ENCODE measurements at regions of chr6 and their contacts with region 1.

Region 1: DNA sequence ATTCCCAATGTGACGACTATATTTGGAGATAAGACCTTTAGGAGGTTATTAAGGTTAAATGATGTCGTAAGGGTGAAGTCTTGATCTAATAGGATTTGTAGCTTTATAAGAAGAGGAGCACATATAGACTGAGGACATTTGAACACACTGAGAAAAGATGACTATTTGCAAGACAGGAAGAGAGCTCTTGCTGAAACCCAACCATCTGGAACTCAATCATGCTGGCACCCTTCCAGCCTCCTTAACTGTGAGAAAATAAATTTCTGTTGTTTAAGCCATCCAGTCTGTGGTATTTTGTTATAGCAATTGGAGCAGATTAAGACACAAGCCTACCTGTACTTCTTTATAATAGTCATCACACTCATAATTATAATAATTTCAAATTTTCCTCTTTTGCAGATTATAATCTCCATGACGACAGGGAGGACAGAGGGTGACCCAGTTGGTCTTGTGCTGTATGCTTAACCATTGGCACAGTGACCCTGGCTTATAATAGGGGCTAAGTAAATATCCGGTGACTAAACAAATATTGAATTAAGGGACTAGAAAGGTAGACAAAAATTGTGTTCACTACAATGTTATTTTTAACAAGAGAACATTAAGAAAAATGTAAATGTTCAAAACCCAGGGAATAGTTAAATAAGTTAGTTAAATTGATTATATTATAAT is 206.4 kb upstream of the HDDC2 start:
- DNase-seq: peak; percentile 66
- H3K4me3 ChIP-seq: no peak overlapping the region
- H3K27ac ChIP-seq: no peak overlapping the region
- H3K4me1 ChIP-seq: peaks cover 10% of the 10 kb centered on the region
- H3K27me3 ChIP-seq: peaks cover 13% of the 10 kb centered on the region
- CTCF ChIP-seq: no peak

Region 2: GRCh38 chr6:125421853-125422252 is 86.3 kb before region 1 on chr6:
- CTCF ChIA-PET with region 1: no interaction called
- POLR2A ChIA-PET with region 1: no interaction called
- intact Hi-C with region 1: no loop called
- DNase-seq: no peak
- H3K4me3 ChIP-seq: no peak overlapping the region
- H3K27ac ChIP-seq: no peak overlapping the region
- H3K4me1 ChIP-seq: no peaks in the 10 kb centered on the region
- H3K27me3 ChIP-seq: no peaks in the 10 kb centered on the region
- CTCF ChIP-seq: no peak

Region 3: DNA sequence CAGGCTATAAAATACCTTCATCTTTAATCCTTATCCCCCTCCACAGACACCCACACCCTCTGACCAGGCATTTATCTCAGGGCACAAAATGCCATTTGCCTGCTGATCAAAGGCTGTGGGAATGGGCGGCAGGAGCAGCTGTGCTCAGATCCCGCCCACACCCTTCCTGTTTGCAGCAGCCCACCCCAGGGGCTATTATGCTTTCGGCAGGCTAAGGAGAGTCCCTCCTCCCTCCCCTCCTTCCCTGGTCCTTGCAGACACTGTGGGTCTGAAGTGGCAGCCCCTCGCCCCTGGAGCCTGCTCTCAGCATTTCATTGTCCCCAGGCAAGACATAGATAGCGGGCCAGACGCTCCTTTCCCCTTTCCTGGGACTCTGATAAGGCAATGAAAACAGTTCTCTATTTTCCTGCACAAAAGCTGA is 20.5 kb after region 1 on chr6:
- CTCF ChIA-PET with region 1: no interaction called
- POLR2A ChIA-PET with region 1: no interaction called
- intact Hi-C with region 1: loop called (anchors 1 kb)
- DNase-seq: peak; percentile 28
- H3K4me3 ChIP-seq: no peak overlapping the region
- H3K27ac ChIP-seq: no peak overlapping the region
- H3K4me1 ChIP-seq: peaks cover 3% of the 10 kb centered on the region
- H3K27me3 ChIP-seq: peaks cover 5% of the 10 kb centered on the region
- CTCF ChIP-seq: no peak

Measured in A673 (cell line).